RWPE1 (cell line): ENCODE measurements at regions of chr9 and their contacts with region 1.

Region 1: DNA sequence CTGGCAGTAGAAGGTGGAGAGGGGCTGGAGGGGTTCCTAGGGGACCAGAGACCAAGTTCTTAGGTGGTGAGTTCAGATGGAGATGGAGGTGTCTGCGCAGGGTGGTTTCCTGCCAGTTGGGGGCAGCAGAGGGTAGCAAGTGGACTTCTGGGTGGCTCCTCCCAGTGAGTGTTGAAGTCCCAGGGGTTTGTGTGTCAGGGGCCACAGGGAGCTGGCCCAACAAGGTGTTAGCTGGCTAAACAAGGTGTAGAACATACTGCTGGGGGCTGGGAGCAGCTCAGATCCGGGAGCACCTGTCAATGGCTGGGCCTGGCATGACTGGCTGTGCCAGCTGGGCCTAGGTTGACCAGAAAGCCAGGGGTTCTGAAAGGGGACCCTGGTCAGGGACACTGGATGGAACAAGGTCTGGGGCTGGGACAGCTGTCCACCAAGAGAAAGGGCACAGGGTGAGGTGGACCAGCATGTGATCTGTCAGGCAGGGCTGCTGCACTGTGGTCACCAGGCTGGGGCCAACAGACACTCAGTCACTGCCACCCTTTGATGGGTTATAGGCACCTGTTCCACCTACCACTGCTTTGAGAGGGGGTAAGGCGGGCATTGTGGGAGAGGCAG is 35.6 kb downstream of the DAB2IP start:
- DNase-seq: peak; percentile 89
- H3K27ac ChIP-seq: no peak overlapping the region
- CTCF ChIP-seq: peak; percentile 97

Region 2: DNA sequence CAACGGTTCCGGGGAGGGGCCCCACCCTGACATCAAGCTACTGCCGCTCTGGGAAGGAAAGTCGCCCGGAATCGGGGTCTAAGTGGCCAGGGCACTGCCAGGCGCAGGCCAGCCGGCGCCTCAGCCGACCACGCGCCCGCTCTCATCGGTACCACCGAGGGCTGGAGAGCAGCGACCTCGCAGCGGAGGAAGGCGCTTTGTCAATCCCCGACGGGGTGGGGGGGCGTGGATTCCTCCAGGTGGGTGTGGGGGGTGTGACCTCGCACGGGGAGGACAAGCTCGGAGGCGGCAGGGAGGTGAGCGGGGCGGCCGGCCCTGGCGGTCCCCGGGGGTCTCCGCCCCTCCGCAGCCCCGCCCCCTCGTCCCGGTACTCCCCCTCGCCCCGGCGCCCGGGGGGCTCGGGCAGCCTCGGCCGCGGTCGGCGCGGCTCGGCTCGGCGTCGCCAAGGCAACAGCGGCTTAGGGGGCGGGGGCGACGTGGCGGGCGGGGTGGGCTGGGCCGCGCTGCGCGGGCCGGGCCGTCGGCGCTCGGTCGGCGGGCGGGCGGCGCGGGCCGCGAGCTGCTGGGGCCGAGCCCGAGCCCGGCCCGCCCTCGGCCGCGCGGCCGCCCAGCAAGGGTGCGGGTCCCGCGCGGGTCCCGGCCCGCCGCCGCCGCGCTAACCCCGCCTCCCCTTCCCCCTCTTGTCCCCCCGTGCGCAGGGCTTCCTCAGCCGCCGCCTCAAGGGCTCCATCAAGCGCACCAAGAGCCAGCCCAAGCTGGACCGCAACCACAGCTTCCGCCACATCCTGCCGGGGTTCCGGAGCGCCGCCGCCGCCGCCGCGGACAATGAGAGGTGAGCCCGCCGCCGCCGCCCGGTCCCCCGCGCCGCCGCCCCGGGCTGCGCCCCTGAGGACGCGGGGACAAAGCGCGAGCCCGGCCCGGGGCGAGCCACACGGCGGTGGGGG is 11.9 kb after region 1 on chr9:
- CTCF ChIA-PET with region 1: interaction called, 17 read pairs
- POLR2A ChIA-PET with region 1: no interaction called
- DNase-seq: peak; percentile 69
- H3K27ac ChIP-seq: peak overlapping the region; percentile 98
- CTCF ChIP-seq: no peak

Region 3: DNA sequence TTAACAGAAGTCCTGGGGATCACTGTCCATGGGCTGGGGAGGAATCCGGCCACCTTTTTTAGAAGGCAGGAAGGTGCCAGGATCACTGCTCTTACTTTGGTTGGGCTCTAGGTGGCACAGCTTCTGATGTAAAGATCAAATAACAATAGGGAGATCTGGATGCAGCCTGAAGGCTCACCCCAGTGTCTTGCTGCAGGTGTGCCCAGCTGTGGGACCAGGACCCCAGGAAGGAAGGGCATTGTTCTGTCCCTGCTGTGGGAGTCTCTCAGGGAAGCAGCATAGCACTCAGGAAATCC is 34.0 kb after region 1 on chr9:
- CTCF ChIA-PET with region 1: interaction called, 10 read pairs
- POLR2A ChIA-PET with region 1: no interaction called
- DNase-seq: no peak
- H3K27ac ChIP-seq: peak overlapping the region; percentile 90
- CTCF ChIP-seq: no peak; the same call in 1 of the 2 replicates